Cardiac septum (tissue), 1 donor: ENCODE measurements at regions of chr10 and their contacts with region 1.

Region 1: GRCh38 chr10:58300676-58301075 is 31.7 kb downstream of the CISD1 start:
- DNase-seq: no peak

Region 2: DNA sequence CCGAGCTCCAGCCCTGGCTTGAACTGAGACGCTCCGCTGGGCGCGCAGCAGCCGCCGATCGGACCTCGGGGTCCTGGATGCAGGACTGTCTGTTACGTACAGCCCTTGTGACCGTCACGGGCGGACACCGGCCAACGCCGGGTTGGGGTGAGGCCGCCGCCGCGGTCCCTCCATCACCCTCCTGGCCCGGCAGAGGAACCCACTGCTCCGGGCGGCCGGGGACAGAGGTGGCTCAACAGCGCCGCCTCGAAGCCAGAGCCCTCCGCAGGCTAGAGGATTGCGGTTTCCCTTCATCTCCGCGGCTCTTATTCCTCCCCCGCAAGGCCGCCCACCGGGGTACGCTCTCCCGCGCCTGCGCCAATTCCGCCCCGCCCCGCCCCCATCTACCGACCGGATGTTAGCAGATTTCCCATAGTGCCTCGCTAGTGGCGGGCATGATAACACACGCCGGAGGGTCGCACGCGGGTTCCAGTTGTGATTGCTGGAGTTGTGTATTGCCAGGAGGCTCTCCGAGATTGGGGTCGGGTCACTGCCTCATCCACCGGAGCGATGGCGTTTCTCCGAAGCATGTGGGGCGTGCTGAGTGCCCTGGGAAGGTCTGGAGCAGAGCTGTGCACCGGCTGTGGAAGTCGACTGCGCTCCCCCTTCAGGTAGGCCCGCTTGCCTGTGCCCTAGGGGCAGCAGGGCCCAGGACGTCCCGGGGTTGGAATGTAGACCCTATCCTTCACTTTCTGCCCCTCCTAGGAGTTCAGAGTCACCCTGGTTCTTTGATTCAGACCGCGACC is 84.5 kb after region 1 on chr10 and contains the start of gene TFAM:
- intact Hi-C with region 1: loop called (anchors 5 kb)
- DNase-seq: peak; percentile 98
- total RNA-seq, gene TFAM: 29.4 TPM